ENCODE measurements at regions of chr16 and their contacts with region 1.

Region 1: DNA sequence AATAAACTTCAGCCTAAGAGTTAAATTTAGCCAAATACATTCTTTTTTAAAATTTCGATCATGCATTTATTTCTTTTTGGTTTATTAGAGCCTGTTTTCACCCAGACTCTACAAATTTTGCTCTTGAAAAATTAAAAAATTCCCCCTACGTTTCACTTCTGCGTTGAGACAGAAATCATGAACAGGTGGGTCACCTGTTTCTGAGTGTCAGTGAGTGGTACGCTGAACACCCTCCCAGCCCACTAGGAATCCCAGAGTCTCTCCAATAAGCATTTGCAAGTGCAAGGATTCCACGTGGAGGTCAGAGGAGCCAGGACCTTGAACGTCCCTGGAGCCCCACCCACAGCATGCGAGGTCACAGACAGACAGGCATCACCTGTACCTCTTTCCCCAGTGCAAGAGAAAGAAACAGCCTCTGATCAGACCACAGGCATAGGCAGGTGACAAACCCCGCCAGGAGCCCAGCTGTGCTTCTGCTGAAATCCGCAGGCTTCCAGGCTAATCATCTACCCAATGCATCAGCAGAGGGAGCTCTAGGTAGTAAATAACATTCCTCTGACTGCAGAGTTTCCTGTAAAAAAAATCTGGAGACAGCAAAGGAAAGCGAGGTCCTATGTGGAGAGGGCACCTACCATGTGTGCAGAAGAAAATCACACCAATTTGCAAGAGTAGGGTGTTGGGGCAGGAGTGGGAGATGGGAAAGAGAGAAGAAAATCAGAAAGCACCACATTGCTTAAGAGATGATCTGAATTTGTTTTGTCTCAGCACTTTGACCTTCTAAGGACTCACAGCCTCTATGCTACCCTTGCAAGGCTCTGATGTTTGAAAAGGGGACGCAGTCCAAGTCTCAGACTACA is 5.9 kb upstream of the XYLT1 start:
- DNase-seq: no peak
- ATAC-seq: peak; percentile 67 to 71
- H3K4me3 ChIP-seq: no peak overlapping the region
- H3K27ac ChIP-seq: no peak overlapping the region
- H3K4me1 ChIP-seq: no peaks in the 10 kb centered on the region
- H3K27me3 ChIP-seq: no peaks in the 10 kb centered on the region

Region 2: DNA sequence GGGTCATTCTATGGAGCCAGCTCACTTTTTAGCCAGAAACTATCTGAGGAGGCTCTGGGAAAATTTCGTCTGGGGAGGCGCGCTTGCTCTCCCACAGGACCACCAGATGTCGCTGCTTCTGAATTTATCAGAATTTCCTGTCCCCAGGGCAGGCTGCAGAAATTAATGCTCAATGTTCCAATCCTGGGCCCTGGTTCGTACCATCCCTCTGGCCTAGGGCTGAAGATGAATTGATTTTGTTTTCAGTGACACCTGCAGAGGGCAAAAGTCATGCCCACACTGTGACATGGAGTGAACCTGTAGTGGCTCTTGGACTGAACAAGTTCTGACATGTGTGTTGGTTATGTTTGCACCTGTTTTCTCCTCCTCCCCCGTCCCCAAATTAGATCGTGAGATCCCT is 615.1 kb before region 1 on chr16:
- intact Hi-C with region 1: loop called in 1 of 4 experiments (anchors 10 kb)
- DNase-seq: peak; percentile 38 to 61 (median 53)
- ATAC-seq: no peak
- H3K4me3 ChIP-seq: no peak overlapping the region
- H3K27ac ChIP-seq: no peak overlapping the region
- H3K4me1 ChIP-seq: no peaks in the 10 kb centered on the region
- H3K27me3 ChIP-seq: no peaks in the 10 kb centered on the region

Region 3: GRCh38 chr16:17389384-17389783 is 87.3 kb before region 1 on chr16:
- intact Hi-C with region 1: no loop called
- DNase-seq: no peak
- ATAC-seq: no peak
- H3K4me3 ChIP-seq: no peak overlapping the region
- H3K27ac ChIP-seq: no peak overlapping the region
- H3K4me1 ChIP-seq: no peaks in the 10 kb centered on the region
- H3K27me3 ChIP-seq: no peaks in the 10 kb centered on the region

Region 4: GRCh38 chr16:17578921-17579874 is 102.6 kb after region 1 on chr16:
- intact Hi-C with region 1: loop called in 1 of 4 experiments (anchors 10 kb)
- DNase-seq: peak in 2 of 3 donors; percentile 29 to 49
- ATAC-seq: peak; percentile 86 to 91
- H3K4me3 ChIP-seq: no peak overlapping the region
- H3K27ac ChIP-seq: no peak overlapping the region
- H3K4me1 ChIP-seq: no peaks in the 10 kb centered on the region
- H3K27me3 ChIP-seq: no peaks in the 10 kb centered on the region

Measured in right cardiac atrium (tissue), 5 donors.